Transverse colon (tissue), 4 donors: ENCODE measurements at regions of chr4 and their contacts with region 1.

Region 1: GRCh38 chr4:34861661-34862060 is 1382.7 kb downstream of the ARAP2 start:
- DNase-seq: no peak
- H3K4me3 ChIP-seq: no peak overlapping the region
- H3K27ac ChIP-seq: no peak overlapping the region
- H3K4me1 ChIP-seq: no peaks in the 10 kb centered on the region
- H3K27me3 ChIP-seq: no peaks in the 10 kb centered on the region
- CTCF ChIP-seq: no peak
- EP300 ChIP-seq: no peak
- POLR2A ChIP-seq: no peak

Region 2: GRCh38 chr4:34720571-34720970 is 141.1 kb before region 1 on chr4:
- in situ Hi-C with region 1: no loop called
- intact Hi-C with region 1: no loop called
- DNase-seq: no peak
- H3K4me3 ChIP-seq: no peak overlapping the region
- H3K27ac ChIP-seq: no peak overlapping the region
- H3K4me1 ChIP-seq: no peaks in the 10 kb centered on the region
- H3K27me3 ChIP-seq: no peaks in the 10 kb centered on the region
- CTCF ChIP-seq: no peak
- EP300 ChIP-seq: no peak
- POLR2A ChIP-seq: no peak

Region 3: GRCh38 chr4:34800953-34801352 is 60.7 kb before region 1 on chr4:
- in situ Hi-C with region 1: loop called in 1 of 4 experiments (anchors 10 kb)
- intact Hi-C with region 1: no loop called
- DNase-seq: no peak
- H3K4me3 ChIP-seq: no peak overlapping the region
- H3K27ac ChIP-seq: no peak overlapping the region
- H3K4me1 ChIP-seq: no peaks in the 10 kb centered on the region
- H3K27me3 ChIP-seq: no peaks in the 10 kb centered on the region
- CTCF ChIP-seq: no peak
- EP300 ChIP-seq: no peak
- POLR2A ChIP-seq: no peak

Region 4: DNA sequence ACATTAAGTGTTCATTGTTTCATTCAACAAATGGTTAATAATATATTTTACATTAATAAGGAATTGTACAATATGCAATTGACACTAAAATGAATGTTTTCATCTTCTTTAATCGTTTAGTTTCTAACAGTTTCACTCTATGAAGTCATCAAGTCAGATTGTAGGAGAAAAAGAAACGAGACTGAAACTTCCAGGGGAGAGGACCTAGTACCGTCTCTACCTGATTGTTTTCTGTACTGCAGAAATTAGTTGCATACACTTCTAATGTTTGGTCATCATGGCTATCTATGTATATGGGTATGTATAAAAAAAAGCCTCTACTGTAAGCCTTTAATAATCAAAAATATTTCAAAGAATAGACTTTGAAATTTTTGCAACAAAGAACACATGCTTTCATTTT is 31.7 kb after region 1 on chr4:
- in situ Hi-C with region 1: no loop called
- intact Hi-C with region 1: no loop called
- DNase-seq: no peak
- H3K4me3 ChIP-seq: no peak overlapping the region
- H3K27ac ChIP-seq: no peak overlapping the region
- H3K4me1 ChIP-seq: no peaks in the 10 kb centered on the region
- H3K27me3 ChIP-seq: no peaks in the 10 kb centered on the region
- CTCF ChIP-seq: no peak
- EP300 ChIP-seq: no peak
- POLR2A ChIP-seq: no peak